ENCODE measurements at regions of chr3 and their contacts with region 1.

Region 1: GRCh38 chr3:43894176-43895049 is 203.7 kb downstream of the ABHD5 start:
- DNase-seq: peak in 1 of 9 donors; percentile 28
- ATAC-seq: peak; percentile 32
- H3K4me3 ChIP-seq: peak overlapping the region; percentile 17
- H3K4me3 Mint-ChIP-seq: peak overlapping the region in 9 of 10 donors; percentile 48 to 76 (median 66)
- H3K27ac ChIP-seq: no peak overlapping the region
- H3K27ac Mint-ChIP-seq: no peak overlapping the region
- H3K4me1 ChIP-seq: peaks cover 0 to 3% of the 10 kb centered on the region in 2 donors
- H3K4me1 Mint-ChIP-seq: peaks cover 0 to 20% (median 13%) of the 10 kb centered on the region in 7 donors
- H3K27me3 ChIP-seq: no peaks in the 10 kb centered on the region
- H3K27me3 Mint-ChIP-seq: peaks cover 56 to 73% (median 67%) of the 10 kb centered on the region in 5 donors

Region 2: DNA sequence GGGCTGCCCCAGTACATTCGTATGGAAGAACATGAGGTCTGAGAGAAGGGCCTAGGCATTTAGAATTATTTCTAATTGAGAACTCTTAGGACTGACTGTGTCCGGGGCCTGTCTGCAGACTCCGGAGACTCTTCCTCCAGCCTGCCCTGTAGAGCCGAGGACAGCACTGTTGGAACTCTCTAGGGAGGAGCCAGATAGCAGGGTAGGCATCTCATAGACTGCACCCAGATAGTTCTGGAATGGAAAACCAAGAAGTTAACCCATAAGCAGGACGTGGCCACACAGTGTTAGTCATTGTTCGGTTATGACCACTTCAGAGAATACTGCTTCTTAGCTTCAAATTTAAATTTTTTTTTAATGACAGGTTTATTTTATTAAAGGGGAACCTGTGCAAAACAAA is 548.5 kb before region 1 on chr3:
- CTCF ChIA-PET with region 1: no interaction called
- POLR2A ChIA-PET with region 1: no interaction called
- intact Hi-C with region 1: no loop called
- DNase-seq: no peak
- ATAC-seq: no peak
- H3K4me3 ChIP-seq: no peak overlapping the region
- H3K4me3 Mint-ChIP-seq: peak overlapping the region in 9 of 10 donors; percentile 18 to 73 (median 64)
- H3K27ac ChIP-seq: peak overlapping the region; percentile 48
- H3K27ac Mint-ChIP-seq: peak overlapping the region; percentile 88 to 96 (median 92)
- H3K4me1 ChIP-seq: peaks cover 68 to 83% of the 10 kb centered on the region in 2 donors
- H3K4me1 Mint-ChIP-seq: peaks cover 41 to 85% (median 74%) of the 10 kb centered on the region in 7 donors
- H3K27me3 ChIP-seq: no peaks in the 10 kb centered on the region
- H3K27me3 Mint-ChIP-seq: no peaks in the 10 kb centered on the region

Region 3: DNA sequence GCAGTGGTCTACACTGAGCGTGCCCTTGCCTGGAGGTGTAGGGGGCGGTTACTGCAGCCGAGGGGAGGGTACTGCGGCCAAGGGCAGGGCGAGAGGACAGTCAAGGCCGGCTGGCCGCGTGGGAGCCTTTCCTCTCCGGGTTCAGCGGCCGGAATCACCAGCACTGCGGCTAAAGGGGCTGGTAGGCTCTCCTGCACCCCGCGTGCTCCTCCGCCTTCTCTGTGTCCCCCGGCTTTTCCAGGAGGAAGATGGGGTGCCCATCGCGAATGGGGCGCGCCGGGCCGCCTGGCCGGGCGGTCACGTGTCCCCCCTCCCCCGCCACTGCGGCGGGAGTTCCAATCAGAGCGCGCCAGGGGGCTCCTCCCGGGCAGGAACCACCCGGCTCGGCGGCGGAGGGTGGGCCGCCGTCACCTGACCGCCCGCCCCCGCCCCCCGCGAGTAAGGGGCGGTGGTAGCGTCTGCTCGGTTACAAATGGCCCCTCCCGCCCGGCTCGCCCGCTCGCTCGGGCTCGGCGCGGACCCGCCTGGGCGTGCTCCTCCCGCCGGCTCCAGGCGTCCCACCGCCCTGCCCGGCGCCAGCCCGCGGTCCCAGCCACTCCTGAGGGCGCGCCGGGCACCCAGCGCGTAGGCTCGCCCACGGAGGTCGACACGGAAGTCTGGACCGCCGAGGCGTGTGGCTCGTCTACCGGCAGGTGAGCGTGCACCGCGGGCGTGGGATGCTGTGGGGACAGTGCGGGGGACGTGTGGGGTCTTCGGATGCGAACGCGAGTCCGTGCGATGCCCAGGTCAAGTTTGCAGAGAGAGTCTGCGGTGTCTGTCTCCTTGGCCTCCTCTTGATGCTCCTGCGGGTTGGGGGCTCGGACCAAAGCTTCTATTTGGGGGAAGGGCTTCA is 104.7 kb after region 1 on chr3:
- CTCF ChIA-PET with region 1: no interaction called
- POLR2A ChIA-PET with region 1: no interaction called
- intact Hi-C with region 1: loop called in 1 of 2 experiments (anchors 5 kb)
- DNase-seq: peak in 1 of 9 donors; percentile 5
- ATAC-seq: peak; percentile 16
- H3K4me3 ChIP-seq: no peak overlapping the region
- H3K4me3 Mint-ChIP-seq: peak overlapping the region; percentile 51 to 92 (median 84)
- H3K27ac ChIP-seq: no peak overlapping the region
- H3K27ac Mint-ChIP-seq: no peak overlapping the region
- H3K4me1 ChIP-seq: peaks cover 9 to 32% of the 10 kb centered on the region in 2 donors
- H3K4me1 Mint-ChIP-seq: peaks cover 21 to 47% (median 44%) of the 10 kb centered on the region in 7 donors
- H3K27me3 ChIP-seq: peaks cover 5 to 25% of the 10 kb centered on the region in 2 donors
- H3K27me3 Mint-ChIP-seq: peaks cover 82 to 86% (median 84%) of the 10 kb centered on the region in 5 donors